ENCODE measurements at regions of chr12 and their contacts with region 1.

Region 1: DNA sequence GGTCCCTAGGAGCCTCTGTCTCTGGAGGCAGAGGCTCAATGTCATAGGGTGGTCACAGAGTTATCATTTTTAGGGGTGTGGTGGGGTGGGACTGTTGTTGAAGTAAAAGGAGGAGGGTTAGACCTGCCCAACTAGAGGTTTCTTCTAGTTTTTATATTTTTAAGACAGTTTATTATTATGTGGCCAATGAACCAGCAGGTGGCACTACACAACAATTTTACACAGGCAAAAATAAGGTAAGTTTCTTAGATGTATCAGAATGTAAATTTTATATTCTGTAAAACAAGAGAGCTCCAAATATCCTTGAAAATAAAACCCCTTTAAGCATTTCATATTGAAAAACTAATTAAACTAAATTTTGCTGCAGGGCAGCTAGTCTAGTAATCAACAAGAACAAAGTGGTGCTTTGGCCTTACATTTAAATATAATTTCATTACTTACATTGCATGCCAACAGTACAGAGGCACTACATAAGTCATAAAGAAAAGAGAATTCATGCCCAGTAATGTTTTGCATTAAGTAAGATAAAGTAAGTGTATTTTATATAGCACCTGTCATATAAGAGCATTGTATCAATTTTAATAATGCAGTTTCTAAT is 22.2 kb upstream of the OVCH1 start:
- DNase-seq: peak; percentile 68
- ATAC-seq: peak; percentile 31
- H3K4me3 ChIP-seq: no peak overlapping the region
- H3K27ac ChIP-seq: no peak overlapping the region
- H3K4me1 ChIP-seq: peaks cover 5% of the 10 kb centered on the region
- H3K27me3 ChIP-seq: no peaks in the 10 kb centered on the region
- CTCF ChIP-seq: peak; percentile 68
- POLR2A ChIP-seq: no peak
- RAD21 ChIP-seq: peak; percentile 76

Region 2: GRCh38 chr12:28583701-28584261 is 935.9 kb before region 1 on chr12:
- CTCF ChIA-PET with region 1: no interaction called
- POLR2A ChIA-PET with region 1: no interaction called
- dilution Hi-C with region 1: no loop called
- in situ Hi-C with region 1: no loop called
- intact Hi-C with region 1: no loop called
- DNase-seq: peak; percentile 34
- ATAC-seq: no peak
- H3K4me3 ChIP-seq: no peak overlapping the region
- H3K27ac ChIP-seq: no peak overlapping the region
- H3K4me1 ChIP-seq: peaks cover 3% of the 10 kb centered on the region; the same call in 1 of the 2 replicates
- H3K27me3 ChIP-seq: no peaks in the 10 kb centered on the region
- CTCF ChIP-seq: peak; percentile 15; the same call in 1 of the 2 replicates
- POLR2A ChIP-seq: no peak
- RAD21 ChIP-seq: no peak

Region 3: DNA sequence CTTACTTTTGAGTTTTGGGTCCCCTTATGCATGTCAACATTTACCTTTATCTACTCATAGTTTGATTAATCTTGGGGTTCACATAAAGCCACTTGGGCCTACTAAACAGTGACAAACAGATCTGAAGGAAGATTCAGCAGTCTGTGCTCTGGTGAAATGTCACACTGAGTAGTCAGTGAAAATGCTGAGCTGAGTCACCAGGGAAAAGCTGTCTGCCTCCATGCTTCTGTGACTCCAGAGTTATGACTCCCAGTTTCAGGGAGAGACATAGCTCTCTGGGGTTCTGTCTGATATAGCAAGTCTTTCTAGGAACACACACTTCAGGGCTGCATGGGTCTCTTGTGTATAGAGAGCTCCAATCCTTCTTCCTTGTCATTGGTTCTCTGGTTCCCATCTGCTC is 776.9 kb before region 1 on chr12:
- CTCF ChIA-PET with region 1: no interaction called
- POLR2A ChIA-PET with region 1: no interaction called
- dilution Hi-C with region 1: no loop called
- in situ Hi-C with region 1: no loop called
- intact Hi-C with region 1: no loop called
- DNase-seq: peak; percentile 42
- ATAC-seq: peak; percentile 80
- H3K4me3 ChIP-seq: no peak overlapping the region
- H3K27ac ChIP-seq: no peak overlapping the region
- H3K4me1 ChIP-seq: peaks cover 1% of the 10 kb centered on the region; the same call in 1 of the 2 replicates
- H3K27me3 ChIP-seq: no peaks in the 10 kb centered on the region
- CTCF ChIP-seq: no peak
- POLR2A ChIP-seq: no peak
- RAD21 ChIP-seq: no peak

Region 4: GRCh38 chr12:29309320-29309902 is 210.3 kb before region 1 on chr12:
- CTCF ChIA-PET with region 1: no interaction called
- POLR2A ChIA-PET with region 1: no interaction called
- dilution Hi-C with region 1: no loop called
- in situ Hi-C with region 1: no loop called
- intact Hi-C with region 1: loop called (anchors 5 kb)
- DNase-seq: peak; percentile 47
- ATAC-seq: 0 out of 2 replicates have a peak, but pooled peaks have one; percentile 29
- H3K4me3 ChIP-seq: no peak overlapping the region
- H3K27ac ChIP-seq: no peak overlapping the region
- H3K4me1 ChIP-seq: no peaks in the 10 kb centered on the region
- H3K27me3 ChIP-seq: no peaks in the 10 kb centered on the region
- CTCF ChIP-seq: peak; percentile 67
- POLR2A ChIP-seq: no peak
- RAD21 ChIP-seq: peak; percentile 67

Region 5: GRCh38 chr12:30286345-30286926 is 766.8 kb after region 1 on chr12:
- CTCF ChIA-PET with region 1: no interaction called
- POLR2A ChIA-PET with region 1: no interaction called
- dilution Hi-C with region 1: no loop called
- in situ Hi-C with region 1: no loop called
- intact Hi-C with region 1: loop called (anchors 1 kb)
- DNase-seq: peak; percentile 42
- ATAC-seq: peak; percentile 75
- H3K4me3 ChIP-seq: no peak overlapping the region
- H3K27ac ChIP-seq: no peak overlapping the region
- H3K4me1 ChIP-seq: no peaks in the 10 kb centered on the region
- H3K27me3 ChIP-seq: no peaks in the 10 kb centered on the region
- CTCF ChIP-seq: peak; percentile 62
- POLR2A ChIP-seq: no peak
- RAD21 ChIP-seq: peak; percentile 72

Region 6: DNA sequence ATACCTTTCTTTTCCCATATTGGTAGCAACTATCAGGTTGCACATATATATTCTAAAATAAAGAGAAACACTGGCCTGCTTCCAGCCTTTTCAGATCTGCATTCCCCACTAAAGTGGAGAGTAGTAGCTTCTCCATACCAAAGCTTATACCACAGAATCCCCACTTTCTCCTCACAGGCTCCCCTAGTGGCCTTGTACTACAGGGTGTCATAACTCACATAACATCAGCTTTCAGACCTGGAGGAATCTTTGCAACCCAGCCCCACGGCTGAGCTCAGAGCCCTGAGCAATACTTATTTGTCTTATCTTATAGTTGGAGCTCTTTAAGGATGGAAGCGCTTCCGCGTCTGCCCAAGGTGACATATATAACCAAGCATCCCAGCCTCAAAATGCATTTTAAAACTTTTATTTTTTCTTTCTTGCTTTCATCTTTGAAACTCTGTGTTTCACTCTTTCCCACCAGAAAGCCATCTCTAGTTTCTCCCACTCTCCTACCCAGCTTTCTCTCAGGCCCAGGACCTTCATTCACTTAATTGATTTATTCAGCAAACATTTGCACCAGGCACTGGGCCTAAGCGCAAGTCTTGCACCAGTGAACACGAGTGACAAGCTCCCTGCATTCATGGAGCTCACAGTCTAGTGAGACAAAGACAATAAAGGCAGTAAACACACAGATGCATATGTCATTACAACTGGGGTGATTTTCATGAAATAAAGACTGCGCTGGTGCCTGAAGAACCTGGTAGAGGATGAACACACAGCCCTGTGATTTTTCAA is 921.3 kb after region 1 on chr12:
- CTCF ChIA-PET with region 1: no interaction called
- POLR2A ChIA-PET with region 1: no interaction called
- dilution Hi-C with region 1: no loop called
- in situ Hi-C with region 1: no loop called
- intact Hi-C with region 1: loop called (anchors 10 kb)
- DNase-seq: peak; percentile 27
- ATAC-seq: peak; percentile 66
- H3K4me3 ChIP-seq: no peak overlapping the region
- H3K27ac ChIP-seq: no peak overlapping the region
- H3K4me1 ChIP-seq: peaks cover 2% of the 10 kb centered on the region; the same call in 1 of the 2 replicates
- H3K27me3 ChIP-seq: no peaks in the 10 kb centered on the region
- CTCF ChIP-seq: peak; percentile 34; the same call in 1 of the 2 replicates
- POLR2A ChIP-seq: no peak
- RAD21 ChIP-seq: 0 out of 2 replicates have a peak, but pooled peaks have one; percentile 14

Region 7: GRCh38 chr12:30500532-30501209 is 981.0 kb after region 1 on chr12:
- CTCF ChIA-PET with region 1: no interaction called
- POLR2A ChIA-PET with region 1: no interaction called
- dilution Hi-C with region 1: no loop called
- in situ Hi-C with region 1: no loop called
- intact Hi-C with region 1: loop called (anchors 10 kb)
- DNase-seq: no peak
- ATAC-seq: no peak
- H3K4me3 ChIP-seq: no peak overlapping the region
- H3K27ac ChIP-seq: no peak overlapping the region
- H3K4me1 ChIP-seq: no peaks in the 10 kb centered on the region
- H3K27me3 ChIP-seq: peaks cover 3% of the 10 kb centered on the region
- CTCF ChIP-seq: no peak
- POLR2A ChIP-seq: no peak
- RAD21 ChIP-seq: no peak

Measured in IMR-90 (cell line).